ENCODE measurements at regions of chr22 and their contacts with region 1.

Region 1: DNA sequence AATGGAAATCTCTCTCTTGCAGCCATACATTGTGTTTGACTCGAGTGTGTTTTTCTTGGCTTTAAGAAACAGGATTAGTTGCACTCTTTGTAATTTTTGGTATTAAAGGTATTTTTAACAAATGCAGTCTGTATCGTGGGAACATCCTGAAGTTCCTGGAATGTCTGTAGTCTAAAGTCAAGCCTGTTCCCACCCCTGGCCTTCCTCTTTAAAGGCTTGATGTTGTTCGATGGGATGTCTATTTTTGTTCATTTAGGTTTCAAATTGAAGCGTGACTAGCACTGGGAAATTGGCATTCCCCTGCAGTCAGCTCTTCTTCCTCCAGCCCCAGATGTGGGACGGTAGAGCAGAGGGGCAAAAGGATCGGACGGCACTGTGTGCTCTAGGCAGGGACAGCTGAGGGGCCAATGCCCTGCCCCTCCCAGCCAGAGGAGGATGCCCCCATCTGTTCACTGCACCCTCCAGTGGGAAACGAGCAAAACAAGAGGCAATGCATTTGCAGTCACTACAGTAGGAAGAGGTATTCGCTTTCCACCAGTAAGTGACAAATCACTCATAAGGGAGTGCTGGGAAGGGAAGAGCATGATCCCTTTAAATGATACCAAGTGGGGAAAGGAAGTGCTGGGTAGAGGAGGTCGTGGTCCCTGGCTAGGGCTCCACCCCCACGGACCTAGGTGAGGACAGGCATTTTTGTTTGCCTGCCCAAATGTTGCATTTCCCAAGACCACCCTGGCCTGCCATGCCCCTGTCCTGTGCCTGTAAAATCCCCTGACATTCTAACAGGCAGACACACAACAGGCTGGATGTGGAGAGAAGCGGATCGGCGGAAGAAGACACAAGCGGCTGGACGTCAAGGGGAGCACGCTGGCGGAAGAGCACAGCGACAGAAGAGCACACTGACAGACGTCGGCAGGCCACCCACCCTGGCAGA is 47.4 kb upstream of the SEPTIN5 start:
- DNase-seq: no peak
- H3K4me3 Mint-ChIP-seq: no peak overlapping the region
- H3K27ac Mint-ChIP-seq: no peak overlapping the region
- H3K4me1 Mint-ChIP-seq: peaks cover 2% of the 10 kb centered on the region
- H3K27me3 Mint-ChIP-seq: no peaks in the 10 kb centered on the region

Region 2: GRCh38 chr22:19679522-19680101 is 12.7 kb after region 1 on chr22:
- CTCF ChIA-PET with region 1: interaction called, 13 read pairs
- intact Hi-C with region 1: no loop called
- DNase-seq: peak; percentile 39
- H3K4me3 Mint-ChIP-seq: no peak overlapping the region
- H3K27ac Mint-ChIP-seq: no peak overlapping the region
- H3K4me1 Mint-ChIP-seq: peaks cover 2% of the 10 kb centered on the region
- H3K27me3 Mint-ChIP-seq: peaks cover 9% of the 10 kb centered on the region

Region 3: DNA sequence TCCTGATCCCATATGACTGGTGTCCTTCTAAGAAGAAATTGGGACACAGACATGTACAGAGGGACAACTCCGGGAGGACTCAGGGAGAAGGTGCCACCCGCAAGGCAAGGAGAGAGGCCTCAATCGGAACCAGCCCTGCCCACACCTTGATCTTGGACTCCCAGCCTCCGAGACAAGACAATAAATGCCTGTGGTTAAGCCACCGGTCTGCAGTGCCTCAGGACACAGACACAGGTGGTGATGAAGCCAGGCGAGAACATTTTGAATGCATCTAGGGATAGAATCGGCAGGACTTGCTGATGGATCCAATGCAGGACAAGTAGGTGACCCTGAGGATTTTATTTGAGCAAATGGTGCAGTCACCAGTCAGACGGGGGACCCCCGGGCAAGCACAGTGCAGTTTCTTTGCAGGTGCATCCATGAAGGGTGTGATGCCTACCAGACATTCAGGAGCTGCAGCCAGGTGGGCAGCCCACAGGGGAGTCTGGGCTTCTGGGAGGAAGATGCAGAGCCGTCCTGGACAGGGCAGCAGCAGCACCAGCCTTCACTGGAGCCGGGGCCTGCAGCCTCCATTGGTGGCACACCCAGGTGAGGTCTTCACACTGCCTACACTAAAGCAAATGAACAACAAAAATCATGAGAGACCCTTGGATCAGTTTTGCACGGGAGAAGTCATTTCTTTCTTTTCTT is 27.2 kb after region 1 on chr22:
- CTCF ChIA-PET with region 1: no interaction called
- intact Hi-C with region 1: no loop called
- DNase-seq: no peak
- H3K4me3 Mint-ChIP-seq: no peak overlapping the region
- H3K27ac Mint-ChIP-seq: no peak overlapping the region
- H3K4me1 Mint-ChIP-seq: no peaks in the 10 kb centered on the region
- H3K27me3 Mint-ChIP-seq: peaks cover 6% of the 10 kb centered on the region